Activated CD4-positive, alpha-beta memory T cell treated with anti-CD3 and anti-CD28 coated beads, Interleukin-2, amount 10 ng/mL, durations not matched to agents 7 days and 5 days (primary cell): ENCODE measurements at regions of chr16 and their contacts with region 1.

Region 1: DNA sequence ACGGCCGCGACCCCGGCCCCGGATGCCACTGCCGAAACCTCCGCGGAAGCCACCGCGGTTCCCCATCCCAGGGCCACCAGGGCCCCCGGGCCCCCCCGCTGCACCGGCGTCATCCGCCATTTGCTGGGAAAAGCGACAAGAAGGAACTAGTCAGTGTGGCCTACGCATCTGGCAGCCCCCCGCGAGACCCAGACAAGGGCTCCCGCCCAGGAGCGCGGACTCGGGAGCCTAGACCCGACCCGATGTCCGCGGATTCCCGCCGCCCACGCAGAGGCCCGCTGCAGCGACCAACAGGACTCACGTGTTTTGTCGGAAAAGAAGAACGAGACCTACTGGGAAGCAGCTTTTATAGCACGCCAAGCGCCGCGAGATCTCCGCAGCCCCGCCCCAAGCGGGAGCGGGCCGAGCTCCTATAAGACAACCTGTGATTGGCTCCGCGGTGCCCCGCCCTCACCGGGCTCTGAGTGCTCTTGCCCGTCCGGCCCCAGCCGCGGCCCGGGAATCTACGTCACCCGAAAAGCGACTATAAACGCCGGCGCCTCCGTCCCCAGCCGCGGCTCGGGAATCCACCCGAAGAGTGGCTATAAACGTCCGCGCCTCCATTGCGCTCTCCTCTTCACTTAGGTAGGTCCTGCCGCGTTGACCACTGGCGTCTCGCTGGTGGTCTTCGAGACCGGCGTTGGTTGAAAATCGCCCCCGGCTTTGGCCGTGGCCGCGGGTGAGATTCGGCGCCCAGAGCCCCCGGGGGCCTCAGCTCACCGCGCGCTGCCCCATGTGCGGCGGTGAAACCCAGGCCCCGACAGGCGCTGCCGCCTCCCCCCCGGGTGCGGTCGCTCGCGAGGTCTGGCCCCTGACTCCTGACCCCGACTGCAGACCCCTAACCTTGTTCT is at the start of gene RPS2:
- DNase-seq: peak; percentile 99
- H3K4me3 Mint-ChIP-seq: peak within 1 kb of the TSS; percentile 84
- H3K27ac Mint-ChIP-seq: peak within 1 kb of the TSS; percentile 95
- H3K4me1 Mint-ChIP-seq: peaks cover 54% of the 10 kb centered on the region
- H3K27me3 Mint-ChIP-seq: no peaks in the 10 kb centered on the region
- total RNA-seq, gene RPS2: 2,364 to 2,405 TPM

Region 2: DNA sequence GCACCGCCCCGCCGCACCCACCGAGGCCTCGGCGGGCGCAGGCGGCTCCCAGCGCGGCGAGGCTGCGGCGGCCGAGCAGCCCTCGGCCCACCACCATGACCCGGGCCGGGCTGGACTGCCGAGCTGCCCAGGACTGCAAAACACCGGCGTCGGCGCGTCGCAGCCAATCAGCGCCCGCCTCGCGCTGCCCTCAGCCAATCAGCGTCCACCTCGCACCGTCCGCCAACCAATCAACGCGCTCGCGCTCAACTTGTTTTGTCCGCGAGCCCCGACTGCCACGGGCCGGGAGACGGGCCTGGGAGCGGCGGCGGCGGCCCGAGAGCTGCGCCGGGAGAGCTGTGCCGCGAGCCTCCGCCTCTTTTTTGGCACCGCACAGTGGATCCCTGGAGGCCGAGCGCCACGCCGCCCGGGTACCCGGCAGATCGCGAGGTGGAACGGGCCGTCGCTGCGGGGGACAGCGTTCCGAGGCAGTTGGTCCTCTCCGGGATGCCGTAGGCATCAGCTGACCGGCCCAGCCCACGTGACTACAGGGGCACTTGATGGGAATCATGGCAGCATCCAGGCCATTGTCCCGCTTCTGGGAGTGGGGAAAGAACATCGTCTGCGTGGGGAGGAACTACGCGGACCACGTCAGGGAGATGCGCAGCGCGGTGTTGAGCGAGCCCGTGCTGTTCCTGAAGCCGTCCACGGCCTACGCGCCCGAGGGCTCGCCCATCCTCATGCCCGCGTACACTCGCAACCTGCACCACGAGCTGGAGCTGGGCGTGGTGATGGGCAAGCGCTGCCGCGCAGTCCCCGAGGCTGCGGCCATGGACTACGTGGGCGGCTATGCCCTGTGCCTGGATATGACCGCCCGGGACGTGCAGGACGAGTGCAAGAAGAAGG is 137.8 kb before region 1 on chr16 and contains the starts of genes FAHD1 and HAGH:
- CTCF ChIA-PET with region 1: no interaction called
- POLR2A ChIA-PET with region 1: interaction called, 10 read pairs
- DNase-seq: peak; percentile 91
- H3K4me3 Mint-ChIP-seq: peak within 1 kb of the TSS; percentile 96
- H3K27ac Mint-ChIP-seq: peak within 1 kb of the TSS; percentile 81
- H3K4me1 Mint-ChIP-seq: peaks cover 42% of the 10 kb centered on the region
- H3K27me3 Mint-ChIP-seq: no peaks in the 10 kb centered on the region
- total RNA-seq, gene FAHD1: 7.7 to 7.9 TPM
- total RNA-seq, gene HAGH: 51.3 to 51.8 TPM

Region 3: DNA sequence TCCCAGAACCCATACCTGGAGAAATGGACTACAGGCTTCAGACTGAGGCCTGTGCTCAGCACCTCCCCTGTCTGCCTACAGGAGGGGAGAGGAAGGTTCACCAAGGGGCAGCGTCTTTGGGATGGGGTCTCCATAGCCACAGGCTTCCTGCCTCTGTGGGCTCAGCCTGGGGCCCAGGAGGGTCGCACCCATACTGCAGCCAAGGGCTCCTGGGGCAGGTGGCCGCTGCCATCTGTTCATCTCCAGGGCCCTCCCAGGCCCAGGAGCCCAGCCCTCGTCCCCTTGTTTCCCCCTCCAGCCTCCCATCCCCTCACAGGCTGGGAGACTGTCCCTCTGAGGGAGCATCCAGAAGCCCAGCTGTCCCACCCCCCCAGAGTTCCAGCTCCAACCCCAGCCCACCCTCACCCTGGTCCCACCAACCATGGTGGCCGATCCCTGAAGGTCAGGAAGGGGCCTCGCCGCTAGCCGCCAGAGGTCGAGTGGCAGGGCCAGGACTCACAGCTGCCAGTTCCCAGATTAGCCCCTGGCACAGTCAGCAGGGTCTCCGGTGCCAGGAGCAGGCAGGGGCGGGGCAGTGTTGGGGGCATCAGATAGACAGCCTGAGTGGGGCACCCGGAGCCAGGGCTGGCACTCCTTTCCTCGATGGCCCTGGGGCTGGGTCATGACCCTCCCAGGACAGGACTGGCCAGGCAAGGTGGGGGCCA is 10.4 kb before region 1 on chr16 and contains the start of gene RPL3L:
- CTCF ChIA-PET with region 1: interaction called, 4 read pairs
- POLR2A ChIA-PET with region 1: interaction called, 33 read pairs
- DNase-seq: no peak
- H3K4me3 Mint-ChIP-seq: no peak within 1 kb of the TSS
- H3K27ac Mint-ChIP-seq: no peak within 1 kb of the TSS
- H3K4me1 Mint-ChIP-seq: peaks cover 2% of the 10 kb centered on the region
- H3K27me3 Mint-ChIP-seq: peaks cover 3% of the 10 kb centered on the region
- total RNA-seq, gene RPL3L: not detected

Region 4: GRCh38 chr16:1991948-1992703 is 27.4 kb after region 1 on chr16:
- CTCF ChIA-PET with region 1: no interaction called
- POLR2A ChIA-PET with region 1: interaction called, 149 read pairs
- DNase-seq: peak; percentile 98
- H3K4me3 Mint-ChIP-seq: peak overlapping the region; percentile 73
- H3K27ac Mint-ChIP-seq: peak overlapping the region; percentile 35
- H3K4me1 Mint-ChIP-seq: peaks cover 37% of the 10 kb centered on the region
- H3K27me3 Mint-ChIP-seq: peaks cover 14% of the 10 kb centered on the region

Region 5: DNA sequence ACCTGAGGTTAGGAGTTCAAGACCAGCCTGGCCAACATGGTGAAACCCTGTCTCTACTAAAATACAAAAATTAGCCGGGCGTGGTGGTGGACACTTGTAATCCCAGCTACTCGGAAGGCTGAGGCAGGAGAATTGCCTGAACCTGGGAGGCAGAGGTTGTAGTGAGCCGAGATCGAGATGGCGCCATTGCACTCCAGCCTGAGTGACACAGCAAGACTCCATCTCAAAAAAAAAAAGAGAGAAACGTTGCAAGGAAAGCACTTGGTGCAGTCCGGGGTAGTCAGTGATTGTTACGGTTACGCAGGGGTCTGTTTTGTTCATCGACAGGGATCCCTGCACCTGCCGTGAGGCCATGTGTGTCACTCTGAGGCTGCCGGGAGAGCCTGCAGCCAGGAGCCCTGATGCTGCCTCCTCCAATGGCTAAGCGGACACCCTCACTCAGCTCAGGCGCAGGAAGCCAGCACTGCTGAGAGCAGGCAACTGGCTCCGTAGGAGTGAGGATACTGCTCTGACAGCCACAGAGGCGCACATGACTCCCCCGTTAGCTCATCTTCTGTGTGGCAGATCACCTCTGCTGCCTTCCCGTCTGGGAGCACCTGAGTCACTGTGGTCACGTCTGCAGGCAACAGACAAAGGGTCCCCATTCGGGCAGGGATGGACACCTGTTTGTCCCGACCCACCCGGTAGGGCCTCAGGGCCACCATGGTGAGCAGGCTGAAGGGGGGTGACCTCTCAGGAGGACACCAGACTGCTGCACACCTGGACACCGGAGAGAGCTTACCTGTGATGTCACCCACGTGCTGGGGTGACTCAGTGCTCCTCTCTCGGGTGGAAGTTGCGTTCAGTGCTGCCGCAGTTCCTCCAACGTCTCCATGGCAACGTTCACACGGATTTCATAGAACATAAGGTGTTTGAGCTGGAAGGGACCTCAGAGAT is 178.5 kb after region 1 on chr16:
- CTCF ChIA-PET with region 1: interaction called, 12 read pairs
- POLR2A ChIA-PET with region 1: interaction called, 11 read pairs
- DNase-seq: no peak
- H3K4me3 Mint-ChIP-seq: no peak overlapping the region
- H3K27ac Mint-ChIP-seq: no peak overlapping the region
- H3K4me1 Mint-ChIP-seq: peaks cover 5% of the 10 kb centered on the region
- H3K27me3 Mint-ChIP-seq: no peaks in the 10 kb centered on the region